ENCODE measurements at regions of chr11 and their contacts with region 1.

Region 1: DNA sequence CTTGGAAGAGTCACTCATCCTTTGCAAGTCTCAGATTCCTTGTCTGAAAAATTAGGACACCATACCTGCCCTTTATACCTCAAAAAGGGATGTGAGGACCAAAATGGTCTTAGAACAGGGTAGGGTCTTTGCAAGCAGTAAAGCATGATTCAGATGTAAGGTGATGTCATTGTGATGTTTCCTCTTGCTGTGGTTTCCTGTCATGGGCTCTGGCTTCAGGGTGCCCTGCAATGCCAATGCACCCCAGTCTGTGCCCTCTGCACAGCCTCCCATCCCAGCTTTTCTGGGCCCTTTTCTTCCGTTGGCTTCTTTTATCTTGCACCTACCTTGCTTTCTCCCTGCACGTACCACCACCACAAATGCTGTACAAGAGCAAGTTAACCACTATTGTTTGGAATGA is 87.8 kb upstream of the NNMT start:
- DNase-seq: no peak

Region 2: DNA sequence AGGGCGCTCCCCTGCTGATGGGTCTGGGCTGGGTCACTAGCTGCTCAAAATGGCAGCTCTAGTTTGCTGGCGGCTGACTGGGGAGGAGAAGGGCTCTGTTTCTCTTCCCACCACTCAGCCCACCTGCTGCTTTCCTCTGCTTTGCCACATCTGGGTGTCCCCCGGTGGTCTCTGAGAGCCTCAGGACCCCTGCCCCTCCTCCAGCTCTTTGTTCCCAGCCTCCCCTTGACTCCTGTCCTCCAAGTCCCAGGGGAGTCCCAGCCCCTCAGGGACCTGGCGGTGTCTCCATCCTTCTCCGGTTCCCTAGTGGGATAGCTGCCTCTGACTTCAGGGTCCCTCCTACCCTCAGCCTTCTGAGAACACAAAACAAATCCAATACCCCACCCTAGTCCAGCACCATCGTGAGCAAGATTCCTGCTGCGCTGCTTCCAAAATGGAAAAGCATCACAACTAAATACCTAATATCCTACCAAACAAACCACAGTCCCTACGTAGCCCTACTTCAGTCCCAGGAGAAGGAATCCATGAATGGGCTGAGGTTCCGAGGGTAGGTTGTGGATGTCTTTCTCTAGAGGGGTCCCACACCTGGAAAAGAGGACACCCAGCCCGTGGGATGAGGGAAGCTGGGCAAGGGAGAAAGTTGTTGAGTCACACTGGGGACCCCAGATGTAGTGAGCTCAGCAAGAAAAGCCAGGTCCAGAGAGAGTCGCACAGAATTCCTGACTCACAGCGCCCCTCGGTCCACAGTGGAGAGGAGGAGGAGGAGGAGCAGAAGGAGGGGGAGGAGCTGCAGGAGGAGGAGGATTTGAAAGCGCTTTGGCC is 42.8 kb after region 1 on chr11:
- intact Hi-C with region 1: loop called in 1 of 2 experiments (anchors 5 kb)
- DNase-seq: no peak

Region 3: GRCh38 chr11:114295676-114296604 is 87.6 kb after region 1 on chr11 and contains the start of gene NNMT:
- intact Hi-C with region 1: no loop called
- DNase-seq: peak; percentile 94
- total RNA-seq, gene NNMT: 631 to 647 TPM

Measured in posterior vena cava (tissue), 2 donors.